B cell (primary cell): ENCODE measurements at regions of chr16 and their contacts with region 1.

Region 1: GRCh38 chr16:89289428-89290395 is 72.2 kb downstream of the ZNF778 start:
- DNase-seq: peak; percentile 73
- ATAC-seq: peak; percentile 87
- H3K4me3 ChIP-seq: no peak overlapping the region
- H3K4me3 Mint-ChIP-seq: no peak overlapping the region
- H3K27ac ChIP-seq: no peak overlapping the region
- H3K27ac Mint-ChIP-seq: no peak overlapping the region
- H3K4me1 ChIP-seq: no peaks in the 10 kb centered on the region
- H3K4me1 Mint-ChIP-seq: peaks cover 4% of the 10 kb centered on the region
- H3K27me3 ChIP-seq: no peaks in the 10 kb centered on the region
- H3K27me3 Mint-ChIP-seq: no peaks in the 10 kb centered on the region
- CTCF ChIP-seq: peak; percentile 85

Region 2: GRCh38 chr16:89142478-89143195 is 147.1 kb before region 1 on chr16:
- CTCF ChIA-PET with region 1: no interaction called
- POLR2A ChIA-PET with region 1: no interaction called
- intact Hi-C with region 1: no loop called
- DNase-seq: no peak
- ATAC-seq: no peak
- H3K4me3 ChIP-seq: no peak overlapping the region
- H3K4me3 Mint-ChIP-seq: no peak overlapping the region
- H3K27ac ChIP-seq: no peak overlapping the region
- H3K27ac Mint-ChIP-seq: no peak overlapping the region
- H3K4me1 ChIP-seq: no peaks in the 10 kb centered on the region
- H3K4me1 Mint-ChIP-seq: no peaks in the 10 kb centered on the region
- H3K27me3 ChIP-seq: no peaks in the 10 kb centered on the region
- H3K27me3 Mint-ChIP-seq: no peaks in the 10 kb centered on the region
- CTCF ChIP-seq: no peak

Region 3: DNA sequence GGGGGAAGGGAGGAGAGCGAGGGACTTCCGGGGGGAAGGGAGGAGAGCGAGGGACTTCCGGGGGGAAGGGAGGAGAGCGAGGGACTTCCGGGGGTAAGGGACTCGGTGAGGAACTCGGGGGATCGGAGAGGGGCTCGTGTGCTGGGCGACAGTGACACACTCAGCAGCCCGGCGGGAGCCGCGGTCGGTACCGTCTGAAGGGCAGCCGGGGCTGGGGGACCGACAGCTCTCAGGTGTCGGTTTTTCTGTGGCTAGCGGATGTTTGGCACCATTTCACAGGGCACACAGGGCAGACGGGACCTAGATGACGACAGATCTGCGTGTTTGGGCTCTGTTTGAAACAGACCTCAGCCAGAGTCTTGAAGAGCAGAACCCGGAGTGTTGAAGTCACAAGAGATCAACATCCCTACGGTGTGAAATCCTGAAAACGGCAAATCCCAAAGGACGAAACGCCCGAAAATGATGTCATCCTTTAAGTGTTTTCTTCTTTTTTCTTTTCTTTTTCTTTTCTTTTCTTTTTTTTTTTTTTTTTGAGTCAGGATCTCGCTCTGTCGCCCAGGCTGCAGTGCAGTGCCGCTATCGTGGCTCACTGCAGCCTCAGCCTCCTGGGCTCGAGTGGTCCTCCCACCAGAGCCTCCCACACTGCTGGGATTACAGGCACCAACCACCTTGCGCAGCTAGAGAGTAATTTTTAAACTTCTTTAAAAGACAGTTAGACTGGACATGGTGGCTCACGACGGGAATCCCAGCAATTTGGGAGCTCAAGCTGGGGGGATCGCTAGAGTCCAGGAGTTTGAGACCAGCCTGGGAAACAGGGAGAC is 48.3 kb before region 1 on chr16:
- CTCF ChIA-PET with region 1: interaction called, 4 read pairs
- POLR2A ChIA-PET with region 1: no interaction called
- intact Hi-C with region 1: loop called (anchors 1 kb)
- DNase-seq: peak; percentile 94
- ATAC-seq: peak; percentile 77
- H3K4me3 ChIP-seq: peak overlapping the region; percentile 74 to 95 (median 82)
- H3K4me3 Mint-ChIP-seq: peak overlapping the region; percentile 99
- H3K27ac ChIP-seq: peak overlapping the region; percentile 93 to 97
- H3K27ac Mint-ChIP-seq: peak overlapping the region; percentile 100
- H3K4me1 ChIP-seq: peaks cover 0 to 11% of the 10 kb centered on the region in 2 donors
- H3K4me1 Mint-ChIP-seq: peaks cover 14% of the 10 kb centered on the region
- H3K27me3 ChIP-seq: no peaks in the 10 kb centered on the region
- H3K27me3 Mint-ChIP-seq: no peaks in the 10 kb centered on the region
- CTCF ChIP-seq: no peak

Region 4: GRCh38 chr16:89401641-89402445 is 112.1 kb after region 1 on chr16:
- CTCF ChIA-PET with region 1: no interaction called
- POLR2A ChIA-PET with region 1: no interaction called
- intact Hi-C with region 1: no loop called
- DNase-seq: no peak
- ATAC-seq: no peak
- H3K4me3 ChIP-seq: no peak overlapping the region
- H3K4me3 Mint-ChIP-seq: peak overlapping the region; percentile 29
- H3K27ac ChIP-seq: no peak overlapping the region
- H3K27ac Mint-ChIP-seq: peak overlapping the region; percentile 20
- H3K4me1 ChIP-seq: peaks cover 25 to 34% of the 10 kb centered on the region in 2 donors
- H3K4me1 Mint-ChIP-seq: peaks cover 63% of the 10 kb centered on the region
- H3K27me3 ChIP-seq: no peaks in the 10 kb centered on the region
- H3K27me3 Mint-ChIP-seq: no peaks in the 10 kb centered on the region
- CTCF ChIP-seq: no peak

Region 5: DNA sequence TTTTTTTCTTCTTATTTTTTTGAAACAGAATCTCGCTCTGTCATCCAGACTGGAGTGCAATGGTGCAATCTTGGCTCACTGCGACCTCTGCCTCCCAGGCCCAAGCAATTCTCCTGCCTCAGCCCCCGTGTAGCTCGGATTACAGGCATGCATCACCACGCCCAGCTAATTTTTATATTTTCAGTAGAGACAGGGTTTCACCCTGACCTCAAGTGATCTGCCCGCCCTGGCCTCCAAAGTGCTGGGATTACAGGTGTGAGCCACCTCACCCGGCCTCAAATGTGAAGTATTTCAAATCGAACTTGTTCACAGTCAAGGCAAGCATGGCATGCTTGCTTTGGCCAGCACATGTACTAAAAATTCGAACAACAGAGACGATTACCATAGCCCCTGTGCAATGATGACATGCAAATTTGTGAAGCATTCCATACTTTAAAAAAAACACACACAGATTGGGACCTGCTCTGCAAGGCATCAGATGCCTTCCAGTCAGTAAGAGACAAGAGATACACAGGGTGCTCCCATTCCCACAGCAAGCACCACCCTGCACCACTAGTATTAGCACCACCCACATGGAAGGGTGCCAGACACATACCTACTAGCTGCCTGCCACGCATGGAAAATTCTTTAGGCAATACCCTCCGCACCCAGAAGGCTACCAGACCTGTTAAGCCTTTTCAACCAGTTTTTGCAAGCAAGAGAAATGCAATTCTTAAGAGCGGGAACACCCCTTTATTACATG is 153.4 kb after region 1 on chr16:
- CTCF ChIA-PET with region 1: no interaction called
- POLR2A ChIA-PET with region 1: no interaction called
- intact Hi-C with region 1: no loop called
- DNase-seq: no peak
- ATAC-seq: no peak
- H3K4me3 ChIP-seq: no peak overlapping the region
- H3K4me3 Mint-ChIP-seq: peak overlapping the region; percentile 57
- H3K27ac ChIP-seq: no peak overlapping the region
- H3K27ac Mint-ChIP-seq: no peak overlapping the region
- H3K4me1 ChIP-seq: peaks cover 48 to 71% of the 10 kb centered on the region in 2 donors
- H3K4me1 Mint-ChIP-seq: peaks cover 79% of the 10 kb centered on the region
- H3K27me3 ChIP-seq: no peaks in the 10 kb centered on the region
- H3K27me3 Mint-ChIP-seq: no peaks in the 10 kb centered on the region
- CTCF ChIP-seq: no peak

Region 6: DNA sequence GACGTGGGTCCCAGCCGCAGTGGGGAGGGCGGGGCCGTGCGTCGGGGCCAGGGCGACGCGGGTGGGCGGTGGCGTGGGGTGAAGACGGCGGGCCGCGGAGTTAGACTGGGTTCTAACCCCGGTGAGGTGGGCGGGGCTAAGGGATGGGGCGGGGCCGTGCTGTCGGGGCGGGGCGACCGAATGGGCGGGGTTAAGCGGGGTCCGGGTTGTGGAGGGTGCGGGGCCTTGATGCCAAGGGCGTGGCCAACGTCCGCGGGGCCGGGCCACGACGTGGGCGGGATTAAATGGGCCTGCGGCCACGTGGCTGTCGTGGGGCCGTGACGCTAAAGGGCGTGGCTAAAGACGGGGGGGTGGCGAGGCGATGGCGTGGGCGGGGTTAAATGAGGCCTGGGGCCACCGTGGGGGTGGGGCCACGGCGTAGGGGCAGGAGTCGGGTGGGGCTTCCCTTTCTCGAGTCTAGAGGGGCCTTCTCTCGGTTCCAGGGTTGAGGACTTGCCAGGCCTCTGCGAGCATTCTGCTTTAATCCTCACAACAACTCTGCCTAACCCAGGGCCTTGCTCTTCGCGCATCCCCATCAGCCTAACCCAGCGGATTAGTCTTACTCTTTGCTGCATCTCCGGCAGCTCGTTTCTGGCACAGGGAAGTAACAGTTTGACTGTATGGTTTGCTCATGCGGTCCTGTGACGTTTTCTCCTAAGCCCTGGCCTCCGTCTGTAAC is 584.4 kb after region 1 on chr16:
- CTCF ChIA-PET with region 1: no interaction called
- POLR2A ChIA-PET with region 1: interaction called, 11 read pairs
- intact Hi-C with region 1: no loop called
- DNase-seq: peak; percentile 99
- ATAC-seq: peak; percentile 82
- H3K4me3 ChIP-seq: peak overlapping the region in 4 of 5 experiments; percentile 92 to 99 (median 97)
- H3K4me3 Mint-ChIP-seq: peak overlapping the region; percentile 95
- H3K27ac ChIP-seq: peak overlapping the region; percentile 100
- H3K27ac Mint-ChIP-seq: peak overlapping the region; percentile 99
- H3K4me1 ChIP-seq: peaks cover 14 to 19% of the 10 kb centered on the region in 2 donors
- H3K4me1 Mint-ChIP-seq: peaks cover 16% of the 10 kb centered on the region
- H3K27me3 ChIP-seq: no peaks in the 10 kb centered on the region
- H3K27me3 Mint-ChIP-seq: no peaks in the 10 kb centered on the region
- CTCF ChIP-seq: no peak